ENCODE measurements at regions of chr19 and their contacts with region 1.

Region 1: DNA sequence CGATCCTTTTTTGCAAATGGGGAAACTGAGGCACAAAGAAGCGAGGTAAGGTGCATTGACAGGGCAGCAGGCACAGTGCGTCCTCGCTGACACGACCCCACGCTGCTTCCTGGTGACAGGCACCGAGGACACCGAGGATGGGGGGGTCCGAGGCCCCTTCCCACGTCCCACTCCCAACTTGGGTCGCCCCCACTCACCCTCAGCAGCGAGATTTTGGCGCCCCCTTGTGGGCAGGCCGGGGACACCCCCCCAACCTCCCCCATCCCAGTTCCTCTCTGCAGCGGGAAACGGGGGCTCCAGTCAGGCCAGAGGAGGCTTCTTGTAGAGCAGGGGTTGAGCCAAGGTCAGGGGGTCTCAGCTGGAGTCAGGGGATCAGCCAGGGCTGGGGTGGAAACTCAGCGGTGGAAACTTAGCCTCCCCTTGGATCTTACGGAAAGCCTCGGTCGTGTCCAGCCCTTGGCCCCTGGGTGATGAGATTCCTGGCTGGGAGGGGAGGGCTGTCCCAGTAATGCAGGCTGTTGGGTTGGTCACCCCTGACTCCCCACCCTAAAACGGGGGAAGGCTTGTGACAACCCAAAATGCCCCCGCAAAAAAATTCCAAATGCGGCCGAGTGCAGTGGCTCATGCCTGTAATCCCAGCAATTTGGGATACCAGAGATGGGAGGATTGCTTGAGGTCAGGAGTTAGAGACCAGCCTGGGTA is 8.2 kb downstream of the SMIM24 start:
- DNase-seq: peak; percentile 29
- H3K4me3 ChIP-seq: no peak overlapping the region
- H3K27ac ChIP-seq: no peak overlapping the region
- H3K4me1 ChIP-seq: no peaks in the 10 kb centered on the region
- H3K27me3 ChIP-seq: no peaks in the 10 kb centered on the region
- CTCF ChIP-seq: peak; percentile 83 to 90
- POLR2A ChIP-seq: no peak

Region 2: GRCh38 chr19:3324321-3324856 is 147.7 kb before region 1 on chr19:
- CTCF ChIA-PET with region 1: interaction called, 39 read pairs
- POLR2A ChIA-PET with region 1: no interaction called
- dilution Hi-C with region 1: no loop called
- intact Hi-C with region 1: loop called (anchors 1 kb)
- DNase-seq: peak; percentile 30
- H3K4me3 ChIP-seq: no peak overlapping the region
- H3K27ac ChIP-seq: no peak overlapping the region
- H3K4me1 ChIP-seq: no peaks in the 10 kb centered on the region
- H3K27me3 ChIP-seq: peaks cover 0 to 1% of the 10 kb centered on the region in 2 experiments
- CTCF ChIP-seq: peak; percentile 78 to 84
- POLR2A ChIP-seq: no peak

Region 3: DNA sequence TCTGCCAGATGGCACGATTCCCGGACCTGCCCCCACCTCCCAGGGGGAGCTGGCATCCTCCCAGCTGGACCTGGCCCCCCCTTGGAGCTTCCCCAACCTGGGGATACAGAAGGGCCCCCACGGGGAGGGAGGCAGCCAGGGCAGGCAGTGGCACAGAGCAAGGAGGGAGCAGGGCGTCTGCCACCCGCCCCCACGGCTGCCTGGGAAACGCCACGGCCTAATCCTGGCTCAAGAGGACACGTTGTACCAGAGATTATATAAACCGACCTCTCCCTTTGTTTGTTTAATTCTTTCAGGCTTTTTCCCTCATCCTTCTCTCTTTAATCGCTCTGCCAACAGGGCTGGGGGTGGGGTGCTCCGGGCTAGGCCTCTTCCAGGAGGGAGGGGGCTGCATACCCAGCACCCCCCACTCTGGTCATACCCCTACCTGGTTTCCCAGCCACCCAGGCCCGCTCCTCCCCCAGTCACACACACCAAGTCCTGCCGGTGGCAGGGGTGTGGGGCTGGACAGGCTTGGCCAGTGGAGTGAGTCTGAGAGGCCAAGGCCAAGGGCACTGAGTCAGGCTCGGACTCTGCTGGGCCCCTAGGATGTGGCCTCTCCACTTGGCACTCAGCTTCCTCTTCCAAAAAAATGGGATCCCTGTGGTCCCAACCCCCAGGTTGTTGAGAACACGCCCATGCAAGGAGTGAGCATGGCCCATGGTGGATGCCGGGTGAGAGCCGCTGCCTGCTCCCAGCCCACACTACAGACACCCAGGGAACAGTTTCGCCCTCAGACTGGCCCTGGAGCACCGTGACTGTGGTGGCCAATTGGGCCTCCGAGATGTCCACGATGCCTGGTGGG is 135.2 kb before region 1 on chr19:
- CTCF ChIA-PET with region 1: interaction called, 10 read pairs
- POLR2A ChIA-PET with region 1: no interaction called
- dilution Hi-C with region 1: no loop called
- intact Hi-C with region 1: no loop called
- DNase-seq: peak; percentile 33
- H3K4me3 ChIP-seq: no peak overlapping the region
- H3K27ac ChIP-seq: no peak overlapping the region
- H3K4me1 ChIP-seq: no peaks in the 10 kb centered on the region
- H3K27me3 ChIP-seq: no peaks in the 10 kb centered on the region
- CTCF ChIP-seq: no peak
- POLR2A ChIP-seq: no peak

Region 4: DNA sequence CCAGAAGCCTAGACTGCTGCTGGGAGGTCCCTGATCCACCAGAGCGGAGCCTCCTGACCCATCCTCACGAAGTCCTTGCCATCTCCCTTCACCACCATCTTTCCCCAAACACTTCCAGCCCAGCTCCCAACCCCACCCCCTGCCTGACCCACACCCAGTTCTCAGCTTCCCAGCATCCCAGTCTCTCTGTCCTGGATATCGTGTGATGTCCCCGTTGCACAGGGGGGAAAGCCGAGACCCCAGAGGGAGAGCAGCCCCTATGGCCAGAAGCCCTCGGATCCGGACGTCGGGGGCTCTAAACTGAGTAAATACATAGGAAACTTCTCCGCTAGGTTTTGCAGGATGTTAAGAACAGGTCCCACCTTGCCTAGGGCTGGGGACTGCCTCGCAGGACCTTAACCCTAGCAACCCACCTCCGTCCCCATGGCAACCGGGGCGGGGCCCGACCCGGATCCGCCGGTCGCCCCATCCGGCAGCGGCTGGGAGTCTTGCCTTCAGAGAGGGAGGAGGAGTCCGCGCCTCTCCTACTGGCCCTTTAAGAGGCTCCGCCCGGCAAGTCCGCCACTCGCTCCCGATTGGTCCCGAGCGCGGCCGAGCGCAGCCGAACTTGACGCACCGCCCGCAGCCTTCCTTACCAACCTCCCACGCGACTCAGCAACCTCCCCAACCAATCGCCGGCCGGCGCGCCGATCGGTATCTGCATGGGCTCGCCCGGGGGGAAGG is 100.2 kb after region 1 on chr19:
- CTCF ChIA-PET with region 1: no interaction called
- POLR2A ChIA-PET with region 1: no interaction called
- dilution Hi-C with region 1: no loop called
- intact Hi-C with region 1: no loop called
- DNase-seq: peak; percentile 100
- H3K4me3 ChIP-seq: peak overlapping the region; percentile 26 to 33 (median 31)
- H3K27ac ChIP-seq: peak overlapping the region; percentile 30
- H3K4me1 ChIP-seq: peaks cover 15% of the 10 kb centered on the region
- H3K27me3 ChIP-seq: no peaks in the 10 kb centered on the region
- CTCF ChIP-seq: no peak
- POLR2A ChIP-seq: no peak

Region 5: GRCh38 chr19:4089400-4089908 is 617.3 kb after region 1 on chr19:
- CTCF ChIA-PET with region 1: no interaction called
- POLR2A ChIA-PET with region 1: no interaction called
- dilution Hi-C with region 1: no loop called
- intact Hi-C with region 1: no loop called
- DNase-seq: no peak
- H3K4me3 ChIP-seq: no peak overlapping the region
- H3K27ac ChIP-seq: no peak overlapping the region
- H3K4me1 ChIP-seq: no peaks in the 10 kb centered on the region
- H3K27me3 ChIP-seq: no peaks in the 10 kb centered on the region
- CTCF ChIP-seq: no peak
- POLR2A ChIP-seq: no peak

Measured in endothelial cell of umbilical vein (primary cell).